Ovary (tissue), 10 donors: ENCODE measurements at regions of chr12 and their contacts with region 1.

Region 1: GRCh38 chr12:5428332-5429221 is 3.3 kb upstream of the NTF3 start:
- DNase-seq: no peak
- H3K4me3 ChIP-seq: no peak overlapping the region
- H3K27ac ChIP-seq: peak overlapping the region in 1 of 2 donors; percentile 22
- H3K4me1 ChIP-seq: peaks cover 2% of the 10 kb centered on the region
- H3K27me3 ChIP-seq: no peaks in the 10 kb centered on the region
- CTCF ChIP-seq: peak; percentile 21 to 72 (median 50)
- EP300 ChIP-seq: no peak
- POLR2A ChIP-seq: no peak

Region 2: DNA sequence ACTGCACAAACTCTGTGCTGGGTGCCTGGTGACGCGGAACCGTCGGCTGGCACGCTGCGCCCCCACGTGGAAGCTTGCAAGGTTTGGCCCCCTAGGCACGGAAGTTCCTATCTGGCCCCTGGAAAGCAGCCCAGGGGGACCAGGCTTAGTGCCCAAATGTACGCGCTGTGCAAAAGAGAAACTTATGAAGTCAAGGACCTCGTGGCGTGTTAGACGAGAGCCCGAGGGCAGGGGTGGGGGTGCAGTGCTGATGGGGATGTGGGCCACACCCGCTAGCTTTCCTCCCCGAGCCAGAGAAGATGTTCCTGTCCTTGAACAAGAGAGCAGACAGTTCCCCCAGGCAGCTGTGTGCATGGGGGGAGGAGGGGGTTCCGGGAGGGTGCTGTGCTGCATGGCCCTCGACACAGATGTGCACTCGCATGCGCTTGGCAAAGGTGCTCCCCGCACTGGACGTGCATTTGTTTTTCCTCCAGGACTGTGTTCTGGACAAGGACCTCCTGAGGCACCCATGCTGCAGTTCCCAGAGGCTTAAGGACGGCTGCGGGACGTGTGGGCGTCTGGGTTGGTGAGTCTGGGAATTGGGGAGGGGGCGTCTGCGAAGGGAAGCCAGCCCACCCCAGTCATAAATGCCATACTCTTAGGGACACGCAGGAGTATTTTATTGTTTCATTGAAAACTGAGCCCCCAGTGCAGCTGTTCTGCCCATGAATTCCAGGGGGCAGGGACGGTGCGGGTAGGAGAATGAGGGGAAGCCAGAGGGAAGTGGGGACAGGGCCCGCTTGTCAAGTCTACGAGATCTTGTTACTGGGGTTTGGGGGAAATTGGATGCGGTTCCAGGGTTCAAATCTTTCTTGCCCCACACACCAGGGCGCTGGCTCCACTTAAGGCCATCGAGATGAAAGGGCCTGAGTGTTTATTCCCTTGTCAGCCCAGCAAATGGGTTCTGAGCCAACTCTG is 83.3 kb after region 1 on chr12:
- intact Hi-C with region 1: loop called in 3 of 4 experiments (anchors 2 to 5 kb)
- DNase-seq: peak; percentile 79 to 96 (median 91)
- H3K4me3 ChIP-seq: no peak overlapping the region
- H3K27ac ChIP-seq: peak overlapping the region in 1 of 2 donors; percentile 65
- H3K4me1 ChIP-seq: peaks cover 10% of the 10 kb centered on the region
- H3K27me3 ChIP-seq: no peaks in the 10 kb centered on the region
- CTCF ChIP-seq: peak; percentile 26 to 54 (median 29)
- EP300 ChIP-seq: no peak
- POLR2A ChIP-seq: no peak

Region 3: DNA sequence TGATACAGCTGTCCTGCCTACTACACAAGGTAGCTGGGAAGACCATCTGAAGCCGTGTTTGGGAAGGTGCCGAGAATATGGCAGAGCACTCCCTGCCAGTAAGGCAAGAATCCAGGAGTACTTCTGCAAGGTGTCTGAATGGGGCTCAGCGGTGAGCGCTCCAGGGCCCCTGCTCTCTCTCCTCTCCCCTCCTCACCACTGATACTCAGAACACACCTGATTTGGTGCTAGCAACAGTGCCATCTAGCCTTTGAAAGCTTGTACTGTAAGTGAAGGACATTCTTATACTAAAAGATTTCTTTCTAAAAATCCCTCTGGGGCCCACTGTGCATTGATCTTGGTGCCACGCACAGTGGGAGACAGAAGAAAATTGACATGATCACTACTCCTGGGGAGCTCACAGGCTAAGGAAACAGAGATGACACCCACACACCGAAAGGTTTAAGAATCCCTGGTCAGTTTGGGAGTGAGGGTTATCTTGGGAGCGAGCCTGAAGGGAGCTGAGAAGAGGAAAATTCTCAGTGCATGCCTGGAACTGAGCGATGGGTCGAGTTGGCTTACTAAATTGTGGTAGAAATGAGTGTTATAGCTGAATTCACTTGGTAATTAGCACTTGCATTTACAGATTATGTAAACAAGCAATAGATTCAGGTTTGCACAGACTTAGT is 220.2 kb after region 1 on chr12:
- intact Hi-C with region 1: loop called in 2 of 4 experiments (anchors 5 kb)
- DNase-seq: peak in 1 of 5 donors; percentile 17
- H3K4me3 ChIP-seq: no peak overlapping the region
- H3K27ac ChIP-seq: no peak overlapping the region
- H3K4me1 ChIP-seq: no peaks in the 10 kb centered on the region
- H3K27me3 ChIP-seq: no peaks in the 10 kb centered on the region
- CTCF ChIP-seq: peak in 1 of 3 donors; percentile 28
- EP300 ChIP-seq: no peak
- POLR2A ChIP-seq: no peak

Region 4: GRCh38 chr12:6039894-6040568 is 611.5 kb after region 1 on chr12:
- intact Hi-C with region 1: loop called in 1 of 4 experiments (anchors 5 kb)
- DNase-seq: peak; percentile 42 to 61 (median 54)
- H3K4me3 ChIP-seq: no peak overlapping the region
- H3K27ac ChIP-seq: no peak overlapping the region
- H3K4me1 ChIP-seq: no peaks in the 10 kb centered on the region
- H3K27me3 ChIP-seq: no peaks in the 10 kb centered on the region
- CTCF ChIP-seq: peak; percentile 74 to 88 (median 87)
- EP300 ChIP-seq: no peak
- POLR2A ChIP-seq: no peak